MCF 10A (cell line): ENCODE measurements at regions of chr14 and their contacts with region 1.

Region 1: DNA sequence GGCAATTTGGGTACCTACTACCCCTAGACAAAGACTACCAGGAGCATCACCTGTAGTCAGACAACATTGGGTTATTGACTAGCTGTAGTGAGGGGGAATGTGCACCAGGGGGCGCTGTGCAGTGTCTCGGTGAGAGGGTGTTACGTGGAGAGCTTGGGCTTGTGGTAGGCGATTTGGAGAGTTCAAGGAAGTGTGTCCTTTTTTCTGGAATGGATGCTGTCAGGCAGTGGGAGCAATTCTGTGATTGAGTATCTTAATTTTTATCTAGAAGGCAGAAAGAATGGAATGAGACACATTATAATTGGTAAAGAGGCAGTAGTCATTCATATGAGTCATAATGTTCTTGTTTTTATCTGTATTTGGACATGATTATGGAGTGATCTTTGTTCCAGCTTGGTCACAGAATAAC is 187.7 kb downstream of the GALC start:
- DNase-seq: peak; percentile 67
- H3K4me3 Mint-ChIP-seq: no peak overlapping the region
- H3K27ac Mint-ChIP-seq: peak overlapping the region; percentile 7
- H3K4me1 Mint-ChIP-seq: peaks cover 6% of the 10 kb centered on the region
- H3K27me3 Mint-ChIP-seq: no peaks in the 10 kb centered on the region
- CTCF ChIP-seq: peak; percentile 72

Region 2: DNA sequence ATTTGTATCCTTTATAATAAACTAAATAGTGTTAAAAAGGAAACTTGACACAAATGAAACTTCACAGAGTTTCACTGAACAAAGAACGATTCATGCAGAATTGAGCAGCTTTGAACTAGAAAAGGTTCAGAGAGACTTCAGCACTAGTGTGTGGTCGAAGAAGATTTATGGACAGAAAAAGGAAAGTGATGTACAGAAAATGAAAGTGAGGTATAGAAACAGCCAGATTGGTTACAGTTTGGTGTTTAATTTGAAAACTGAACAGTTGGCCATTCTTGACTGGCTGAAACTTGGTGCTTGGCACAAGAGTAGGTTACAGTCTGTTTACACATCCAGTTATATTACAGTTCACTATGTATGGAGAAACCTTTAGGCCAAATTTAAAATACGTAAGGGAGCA is 19.4 kb before region 1 on chr14:
- CTCF ChIA-PET with region 1: interaction called, 28 read pairs
- POLR2A ChIA-PET with region 1: no interaction called
- intact Hi-C with region 1: no loop called
- DNase-seq: no peak
- H3K4me3 Mint-ChIP-seq: no peak overlapping the region
- H3K27ac Mint-ChIP-seq: no peak overlapping the region
- H3K4me1 Mint-ChIP-seq: peaks cover 11% of the 10 kb centered on the region
- H3K27me3 Mint-ChIP-seq: no peaks in the 10 kb centered on the region
- CTCF ChIP-seq: no peak

Region 3: GRCh38 chr14:87838931-87839330 is 33.6 kb after region 1 on chr14:
- CTCF ChIA-PET with region 1: interaction called, 10 read pairs
- POLR2A ChIA-PET with region 1: no interaction called
- intact Hi-C with region 1: no loop called
- DNase-seq: no peak
- H3K4me3 Mint-ChIP-seq: no peak overlapping the region
- H3K27ac Mint-ChIP-seq: no peak overlapping the region
- H3K4me1 Mint-ChIP-seq: no peaks in the 10 kb centered on the region
- H3K27me3 Mint-ChIP-seq: no peaks in the 10 kb centered on the region
- CTCF ChIP-seq: no peak

Region 4: GRCh38 chr14:87877877-87878276 is 72.6 kb after region 1 on chr14:
- CTCF ChIA-PET with region 1: interaction called, 12 read pairs
- POLR2A ChIA-PET with region 1: no interaction called
- intact Hi-C with region 1: loop called (anchors 5 kb)
- DNase-seq: peak; percentile 80
- H3K4me3 Mint-ChIP-seq: no peak overlapping the region
- H3K27ac Mint-ChIP-seq: no peak overlapping the region
- H3K4me1 Mint-ChIP-seq: no peaks in the 10 kb centered on the region
- H3K27me3 Mint-ChIP-seq: no peaks in the 10 kb centered on the region
- CTCF ChIP-seq: no peak